Activated T-helper 1 cell treated with anti-CD3 and anti-CD28 coated beads, Interleukin-12 subunit alpha, Interleukin-12 subunit beta, Interleukin-2, Interleukin-4 antibody, amounts not matched to agents 30 ng/mL and 10 ng/mL and 1 ng/mL, durations not matched to agents 14 hours and 24 hours and 36 hours (primary cell): ENCODE measurements at regions of chr18 and their contacts with region 1.

Region 1: GRCh38 chr18:42706618-42707017 is 408.9 kb downstream of the RIT2 start:
- DNase-seq: no peak
- H3K4me3 Mint-ChIP-seq: no peak overlapping the region
- H3K27ac Mint-ChIP-seq: no peak overlapping the region
- H3K4me1 Mint-ChIP-seq: no peaks in the 10 kb centered on the region
- H3K27me3 Mint-ChIP-seq: no peaks in the 10 kb centered on the region

Region 2: DNA sequence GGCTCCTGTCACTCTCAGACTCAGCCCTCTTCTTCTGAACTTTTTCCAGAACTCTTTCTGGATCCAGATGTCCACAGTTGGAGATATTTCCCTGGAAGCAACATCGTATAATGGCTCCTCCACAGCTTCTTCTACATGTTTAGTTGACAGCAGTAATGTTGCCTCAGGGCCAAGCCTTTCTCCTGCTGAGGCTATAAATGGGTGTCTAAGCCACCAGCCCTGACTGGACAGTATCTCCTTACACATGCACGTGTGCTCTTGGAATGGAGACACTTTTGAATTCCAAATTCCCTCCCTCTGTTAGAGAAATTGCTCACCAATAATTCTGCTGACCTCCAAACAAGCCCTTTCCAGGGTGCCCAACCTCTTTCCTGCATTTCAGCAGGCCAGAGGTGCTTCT is 907.7 kb before region 1 on chr18:
- intact Hi-C with region 1: no loop called
- DNase-seq: no peak
- H3K4me3 Mint-ChIP-seq: no peak overlapping the region
- H3K27ac Mint-ChIP-seq: no peak overlapping the region
- H3K4me1 Mint-ChIP-seq: no peaks in the 10 kb centered on the region
- H3K27me3 Mint-ChIP-seq: no peaks in the 10 kb centered on the region

Region 3: DNA sequence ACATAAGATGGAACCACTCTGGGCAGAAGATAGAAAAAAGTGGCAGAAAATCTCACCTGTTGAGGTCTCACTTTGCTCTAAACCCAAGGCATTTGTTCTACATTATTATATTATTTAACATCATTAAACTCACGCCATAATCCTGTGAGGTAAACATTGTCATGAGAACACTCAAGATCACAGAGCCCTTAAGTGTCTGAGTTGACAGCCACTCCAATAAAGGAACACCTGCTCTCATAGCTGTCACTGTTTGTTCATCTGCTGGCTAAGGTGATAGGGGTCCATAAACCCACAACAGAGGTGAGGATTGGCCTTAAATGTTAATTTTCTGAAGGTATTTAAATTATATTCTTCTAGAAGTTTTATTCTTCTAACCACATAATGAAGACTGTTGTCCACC is 30.8 kb before region 1 on chr18:
- intact Hi-C with region 1: no loop called
- DNase-seq: no peak
- H3K4me3 Mint-ChIP-seq: no peak overlapping the region
- H3K27ac Mint-ChIP-seq: no peak overlapping the region
- H3K4me1 Mint-ChIP-seq: no peaks in the 10 kb centered on the region
- H3K27me3 Mint-ChIP-seq: no peaks in the 10 kb centered on the region

Region 4: GRCh38 chr18:42893977-42894376 is 187.4 kb after region 1 on chr18:
- intact Hi-C with region 1: loop called (anchors 10 kb)
- DNase-seq: no peak
- H3K4me3 Mint-ChIP-seq: no peak overlapping the region
- H3K27ac Mint-ChIP-seq: no peak overlapping the region
- H3K4me1 Mint-ChIP-seq: no peaks in the 10 kb centered on the region
- H3K27me3 Mint-ChIP-seq: no peaks in the 10 kb centered on the region